Left ventricle myocardium superior (tissue), 1 donor: ENCODE measurements at regions of chr17 and their contacts with region 1.

Region 1: GRCh38 chr17:8581002-8581658 is 49.4 kb downstream of the MYH10 start:
- DNase-seq: no peak
- ATAC-seq: no peak

Region 2: DNA sequence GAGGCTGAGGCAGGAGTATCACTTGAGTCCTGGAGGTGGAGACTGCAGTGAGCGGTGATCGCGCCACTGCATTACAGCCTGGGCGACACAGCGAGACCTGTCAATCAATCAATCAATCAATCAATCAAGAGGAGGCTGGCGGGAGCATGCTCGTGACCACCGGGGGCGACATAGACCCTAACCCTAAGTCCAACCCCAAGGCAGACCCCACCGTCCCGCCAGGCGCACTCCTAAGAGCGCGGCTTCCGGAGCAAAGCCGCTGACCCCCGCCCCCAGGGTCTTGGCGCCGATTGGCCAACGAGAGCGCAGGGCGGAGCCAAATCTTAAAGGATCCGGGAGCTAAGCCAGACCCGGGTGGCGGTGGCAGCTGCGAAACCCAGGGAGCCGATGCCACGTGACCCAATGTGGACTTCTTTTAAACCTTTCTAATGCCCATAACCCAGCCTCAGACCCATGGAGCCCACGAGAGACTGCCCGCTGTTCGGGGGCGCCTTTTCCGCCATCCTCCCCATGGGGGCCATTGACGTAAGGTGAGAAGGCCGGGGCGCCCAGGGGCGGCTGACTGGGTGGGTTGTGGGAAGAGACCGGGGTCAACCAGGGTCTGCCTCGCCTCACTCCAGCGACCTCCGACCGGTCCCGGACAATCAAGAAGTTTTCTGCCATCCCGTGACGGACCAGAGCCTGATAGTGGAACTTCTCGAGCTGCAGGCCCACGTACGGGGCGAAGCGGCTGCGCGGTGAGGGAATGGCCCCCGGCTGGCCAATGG is 292.6 kb before region 1 on chr17 and contains the start of gene RANGRF:
- intact Hi-C with region 1: no loop called
- DNase-seq: peak; percentile 93
- ATAC-seq: peak; percentile 95
- total RNA-seq, gene RANGRF: 24.9 TPM

Region 3: GRCh38 chr17:8447799-8448198 is 133.3 kb before region 1 on chr17:
- intact Hi-C with region 1: no loop called
- DNase-seq: no peak
- ATAC-seq: peak; percentile 74

Region 4: GRCh38 chr17:8745586-8746500 is 164.7 kb after region 1 on chr17:
- intact Hi-C with region 1: loop called (anchors 5 kb)
- DNase-seq: peak; percentile 85
- ATAC-seq: peak; percentile 97